PC-3 (cell line): ENCODE measurements at regions of chr12 and their contacts with region 1.

Region 1: DNA sequence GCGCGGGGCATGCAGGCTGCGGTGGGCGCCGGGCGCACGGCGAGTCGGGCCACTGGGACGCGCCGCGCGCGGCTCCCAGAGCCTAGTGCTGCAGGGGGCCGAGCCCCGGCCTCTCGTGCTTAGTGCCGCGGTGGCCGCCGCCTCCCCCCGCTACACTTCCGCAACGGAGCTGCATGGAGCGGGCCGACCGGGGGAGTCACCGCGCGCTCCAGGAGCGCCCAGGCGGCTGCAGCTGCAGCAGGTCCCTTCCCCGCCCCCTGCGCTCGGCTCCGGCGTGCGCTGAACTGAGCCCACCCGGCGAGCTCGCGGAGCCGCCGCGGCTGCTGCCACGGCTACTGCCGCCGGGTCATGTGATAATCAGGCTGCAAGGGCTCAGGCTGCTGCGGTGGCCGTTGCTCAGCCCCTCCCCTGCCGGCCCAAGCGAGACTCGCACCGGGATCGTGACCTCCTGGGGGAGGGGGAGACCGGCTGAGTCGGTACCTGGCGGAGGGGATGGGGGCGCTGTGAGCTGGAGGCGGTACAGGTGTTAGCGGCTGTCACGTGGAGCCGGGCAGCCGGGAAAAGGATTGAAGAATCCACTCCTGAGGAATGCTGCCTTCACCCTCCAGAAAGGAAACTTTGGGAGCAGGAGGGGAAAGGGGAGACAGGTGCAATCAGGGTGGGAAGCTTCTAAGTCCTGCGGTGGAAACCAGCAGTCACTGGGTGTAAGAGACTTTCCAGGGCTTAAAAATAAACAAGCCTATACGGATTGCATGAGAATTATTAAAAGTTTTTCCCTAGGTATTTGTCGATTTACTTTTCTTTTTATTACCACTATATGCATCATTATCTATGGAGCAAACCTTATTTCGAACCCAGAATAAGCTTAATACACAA is at the start of gene PPM1H:
- DNase-seq: peak; percentile 89
- ATAC-seq: peak; percentile 80
- H3K4me3 ChIP-seq: peak within 1 kb of the TSS; percentile 82
- H3K27ac ChIP-seq: peak within 1 kb of the TSS; percentile 10
- H3K4me1 ChIP-seq: peaks cover 23% of the 10 kb centered on the region
- H3K27me3 ChIP-seq: no peaks in the 10 kb centered on the region
- CTCF ChIP-seq: peak; percentile 75
- total RNA-seq, gene PPM1H: 9.8 and 12.0 TPM in 2 replicates

Region 2: GRCh38 chr12:62603061-62603810 is 331.8 kb before region 1 on chr12:
- CTCF ChIA-PET with region 1: no interaction called
- POLR2A ChIA-PET with region 1: no interaction called
- intact Hi-C with region 1: loop called (anchors 5 kb)
- DNase-seq: peak; percentile 89
- ATAC-seq: peak; percentile 78
- H3K4me3 ChIP-seq: peak overlapping the region; percentile 92
- H3K27ac ChIP-seq: peak overlapping the region; percentile 99
- H3K4me1 ChIP-seq: peaks cover 39% of the 10 kb centered on the region
- H3K27me3 ChIP-seq: no peaks in the 10 kb centered on the region
- CTCF ChIP-seq: peak; percentile 44

Region 3: DNA sequence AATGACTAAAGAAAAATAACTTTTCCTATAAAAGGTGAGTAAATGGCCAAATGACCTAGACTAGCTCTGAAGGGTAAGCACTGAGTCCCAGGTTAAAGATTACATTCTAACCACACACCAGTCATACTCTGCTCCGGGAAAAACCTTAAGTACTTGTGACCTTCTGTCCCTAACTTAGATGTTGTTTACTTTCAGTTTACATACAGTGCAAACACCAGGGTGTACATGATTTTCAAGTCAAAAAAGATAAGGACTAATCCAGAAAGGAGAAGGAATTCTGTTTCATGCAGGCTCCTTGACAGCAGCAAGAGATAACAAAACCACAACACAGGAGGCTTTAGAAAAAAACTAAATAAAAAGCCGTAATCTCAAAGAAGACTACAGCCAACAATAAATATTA is 174.3 kb before region 1 on chr12:
- CTCF ChIA-PET with region 1: no interaction called
- POLR2A ChIA-PET with region 1: no interaction called
- intact Hi-C with region 1: no loop called
- DNase-seq: no peak
- ATAC-seq: peak; percentile 27
- H3K4me3 ChIP-seq: no peak overlapping the region
- H3K27ac ChIP-seq: no peak overlapping the region
- H3K4me1 ChIP-seq: peaks cover 25% of the 10 kb centered on the region
- H3K27me3 ChIP-seq: no peaks in the 10 kb centered on the region
- CTCF ChIP-seq: no peak

Region 4: GRCh38 chr12:62866451-62867082 is 68.5 kb before region 1 on chr12:
- CTCF ChIA-PET with region 1: no interaction called
- POLR2A ChIA-PET with region 1: no interaction called
- intact Hi-C with region 1: loop called (anchors 2 kb)
- DNase-seq: peak; percentile 81
- ATAC-seq: peak; percentile 82
- H3K4me3 ChIP-seq: no peak overlapping the region
- H3K27ac ChIP-seq: peak overlapping the region; percentile 42
- H3K4me1 ChIP-seq: peaks cover 56% of the 10 kb centered on the region
- H3K27me3 ChIP-seq: no peaks in the 10 kb centered on the region
- CTCF ChIP-seq: no peak

Region 5: DNA sequence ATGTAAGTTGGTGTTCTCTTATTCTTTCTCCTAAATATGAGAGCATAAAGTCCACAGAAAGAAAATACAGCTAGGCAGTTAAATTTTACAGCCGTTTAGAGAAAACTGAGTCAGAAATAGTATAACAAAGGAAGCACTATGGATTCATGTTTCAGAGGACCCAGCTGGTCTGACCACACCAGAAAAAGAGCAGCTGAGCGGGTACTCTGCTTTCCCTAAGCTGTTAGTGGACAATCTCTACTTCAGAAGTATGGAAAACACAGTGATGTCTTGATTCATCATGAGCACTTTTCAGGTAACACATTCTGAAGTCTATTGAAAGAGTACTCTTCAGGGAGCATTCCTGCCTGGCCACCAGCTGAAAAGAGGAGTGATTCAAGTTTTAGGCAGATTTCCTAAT is 12.5 kb before region 1 on chr12:
- CTCF ChIA-PET with region 1: interaction called, 3 read pairs
- POLR2A ChIA-PET with region 1: interaction called, 4 read pairs
- intact Hi-C with region 1: loop called (anchors 1 kb)
- DNase-seq: peak; percentile 84
- ATAC-seq: peak; percentile 94
- H3K4me3 ChIP-seq: peak overlapping the region; percentile 14; the same call in 1 of the 2 replicates
- H3K27ac ChIP-seq: peak overlapping the region; percentile 62
- H3K4me1 ChIP-seq: peaks cover 39% of the 10 kb centered on the region
- H3K27me3 ChIP-seq: no peaks in the 10 kb centered on the region
- CTCF ChIP-seq: no peak

Region 6: GRCh38 chr12:62983599-62984022 is 48.6 kb after region 1 on chr12:
- CTCF ChIA-PET with region 1: no interaction called
- POLR2A ChIA-PET with region 1: no interaction called
- intact Hi-C with region 1: loop called (anchors 2 kb)
- DNase-seq: peak; percentile 39
- ATAC-seq: no peak; the same call in 1 of the 2 replicates
- H3K4me3 ChIP-seq: no peak overlapping the region
- H3K27ac ChIP-seq: no peak overlapping the region
- H3K4me1 ChIP-seq: peaks cover 24% of the 10 kb centered on the region
- H3K27me3 ChIP-seq: no peaks in the 10 kb centered on the region
- CTCF ChIP-seq: peak; percentile 56